Ascending aorta (tissue), 2 donors: ENCODE measurements at regions of chr1 and their contacts with region 1.

Region 1: DNA sequence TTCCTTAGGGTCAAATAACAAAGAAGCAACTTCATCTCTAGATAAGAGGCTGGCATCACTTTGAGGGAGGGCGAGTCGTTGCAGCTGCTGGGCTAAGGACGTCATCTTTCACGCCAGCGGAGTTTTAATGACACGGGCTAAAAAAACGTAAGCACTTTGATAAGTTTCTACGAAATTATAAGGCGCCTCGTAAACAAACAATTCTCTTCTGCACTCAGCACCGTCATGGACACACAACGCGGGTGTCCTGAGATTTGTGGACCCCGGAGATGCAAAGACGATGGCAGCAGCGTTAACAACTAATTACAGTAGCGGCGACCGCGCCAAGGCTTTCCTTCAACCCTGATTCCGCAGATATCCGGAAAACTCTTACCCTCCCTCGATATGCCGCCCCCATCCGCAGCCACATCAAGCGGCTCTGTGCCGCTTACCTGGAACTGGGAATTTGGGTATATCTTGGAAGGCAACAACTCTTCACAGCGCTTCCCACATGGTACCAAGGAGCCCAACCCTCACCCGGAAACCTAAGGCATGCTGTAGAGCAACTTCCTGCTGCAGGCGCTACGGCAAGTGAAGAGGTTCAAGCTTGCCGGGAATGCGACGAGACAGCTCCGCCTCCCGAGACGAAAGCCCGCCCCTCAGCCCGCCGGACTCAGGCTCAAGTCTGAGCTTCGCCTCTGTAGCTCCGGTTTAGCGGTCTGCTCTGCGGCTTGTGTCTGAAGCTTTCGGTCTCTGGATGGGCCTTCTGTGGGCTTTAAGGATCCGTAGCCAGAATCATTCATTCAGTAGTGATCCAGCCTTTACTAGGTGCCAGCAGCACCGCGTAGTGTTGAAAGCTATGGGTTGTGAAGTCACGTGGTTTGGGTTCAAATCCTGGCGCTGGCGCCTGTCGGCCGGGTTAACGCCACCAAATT is at the start of gene HEATR1:
- DNase-seq: peak; percentile 62 to 96
- H3K4me3 ChIP-seq: peak within 1 kb of the TSS; percentile 73 to 79
- H3K27ac ChIP-seq: peak within 1 kb of the TSS; percentile 83
- H3K4me1 ChIP-seq: peaks cover 3 to 8% of the 10 kb centered on the region in 2 donors
- H3K27me3 ChIP-seq: no peaks in the 10 kb centered on the region
- CTCF ChIP-seq: no peak
- total RNA-seq, gene HEATR1: 14.2 TPM

Region 2: DNA sequence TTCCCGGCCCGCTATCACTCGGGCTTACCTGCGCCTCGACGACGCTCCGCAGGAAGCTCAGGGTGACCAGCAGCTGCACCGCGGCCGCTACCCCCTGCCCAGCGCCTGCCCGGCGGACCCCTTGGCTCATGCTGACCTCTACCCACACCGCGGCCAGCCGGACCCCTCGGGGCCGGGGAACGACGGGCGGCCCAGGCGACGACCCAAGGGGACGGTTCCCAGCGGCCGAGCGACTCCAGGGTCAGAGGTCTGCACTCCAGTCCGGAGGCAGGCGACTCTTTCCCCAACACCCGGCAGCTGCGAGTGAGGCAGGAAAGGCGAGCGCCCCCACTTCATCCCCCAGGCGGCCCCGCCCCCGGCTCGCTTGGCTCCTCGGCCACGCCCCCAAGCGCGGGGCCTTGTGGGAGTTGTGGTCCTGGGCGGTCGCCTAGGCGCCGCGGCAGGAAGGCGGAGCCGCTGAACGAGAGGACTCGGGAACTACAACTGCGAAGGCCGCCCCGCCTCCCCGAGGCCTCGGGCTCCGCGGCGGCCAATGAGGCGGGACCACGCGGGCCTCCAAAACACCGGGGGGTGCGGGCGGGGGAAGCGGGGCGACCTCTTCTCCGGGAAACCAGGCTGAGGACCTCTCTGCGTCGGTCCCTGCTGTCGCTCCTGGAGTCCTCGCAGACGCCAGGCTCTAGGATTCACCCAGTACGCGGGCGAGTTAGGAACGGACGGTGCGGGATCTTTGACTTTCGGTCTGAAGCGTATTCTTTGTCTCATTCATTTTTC is 322.4 kb before region 1 on chr1 and contains the start of gene ERO1B:
- intact Hi-C with region 1: loop called (anchors 5 kb)
- DNase-seq: peak; percentile 94 to 99
- H3K4me3 ChIP-seq: peak within 1 kb of the TSS; percentile 80 to 98
- H3K27ac ChIP-seq: peak within 1 kb of the TSS; percentile 71 to 89
- H3K4me1 ChIP-seq: peaks cover 0 to 4% of the 10 kb centered on the region in 2 donors
- H3K27me3 ChIP-seq: no peaks in the 10 kb centered on the region
- CTCF ChIP-seq: no peak
- total RNA-seq, gene ERO1B: 5.1 TPM

Region 3: DNA sequence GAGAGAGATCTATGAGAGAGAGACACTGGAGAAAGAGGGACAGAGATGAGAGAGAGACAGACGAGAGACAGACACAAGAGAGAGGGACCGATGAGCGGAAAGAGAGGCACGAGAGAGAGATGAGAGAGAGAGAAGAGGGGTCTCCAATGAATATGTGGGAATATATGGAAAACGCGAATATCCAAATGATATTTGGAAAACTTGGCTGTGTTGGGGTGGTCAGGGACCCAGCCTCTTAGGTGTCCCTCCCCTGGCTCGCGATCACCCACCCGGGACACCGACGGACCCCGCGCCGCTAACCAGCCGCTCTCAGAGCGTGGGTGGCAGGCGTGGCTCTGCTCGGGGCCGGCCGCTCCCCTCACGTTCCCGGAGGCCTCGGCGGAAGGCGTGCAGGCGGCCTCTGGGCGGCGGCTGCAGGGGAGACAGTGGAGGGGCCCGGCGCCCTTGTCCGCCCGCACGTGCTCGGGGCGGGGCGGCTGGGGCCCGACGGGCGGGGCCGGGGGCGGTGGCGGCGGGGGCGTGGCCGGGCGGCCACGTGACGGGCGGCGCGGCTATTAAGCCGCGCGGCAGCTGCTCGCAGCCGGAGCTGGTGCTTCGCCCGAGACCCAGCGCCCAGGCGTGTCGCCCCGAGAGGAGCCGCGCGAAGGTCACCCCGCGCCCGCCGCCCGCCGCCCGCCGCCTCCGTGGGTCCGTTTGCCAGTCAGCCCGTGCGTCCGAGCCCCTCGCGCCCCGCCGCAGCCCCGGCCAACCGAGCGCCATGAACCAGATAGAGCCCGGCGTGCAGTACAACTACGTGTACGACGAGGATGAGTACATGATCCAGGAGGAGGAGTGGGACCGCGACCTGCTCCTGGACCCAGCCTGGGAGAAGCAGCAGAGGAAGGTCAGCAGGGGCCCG is 81.9 kb after region 1 on chr1 and contains the start of gene ACTN2:
- intact Hi-C with region 1: loop called (anchors 5 kb)
- DNase-seq: peak in 1 of 2 donors; percentile 79
- H3K4me3 ChIP-seq: peak within 1 kb of the TSS; percentile 76 to 87
- H3K27ac ChIP-seq: peak within 1 kb of the TSS; percentile 85 to 86
- H3K4me1 ChIP-seq: peaks cover 0 to 8% of the 10 kb centered on the region in 2 donors
- H3K27me3 ChIP-seq: no peaks in the 10 kb centered on the region
- CTCF ChIP-seq: no peak
- total RNA-seq, gene ACTN2: 10.5 TPM

Region 4: DNA sequence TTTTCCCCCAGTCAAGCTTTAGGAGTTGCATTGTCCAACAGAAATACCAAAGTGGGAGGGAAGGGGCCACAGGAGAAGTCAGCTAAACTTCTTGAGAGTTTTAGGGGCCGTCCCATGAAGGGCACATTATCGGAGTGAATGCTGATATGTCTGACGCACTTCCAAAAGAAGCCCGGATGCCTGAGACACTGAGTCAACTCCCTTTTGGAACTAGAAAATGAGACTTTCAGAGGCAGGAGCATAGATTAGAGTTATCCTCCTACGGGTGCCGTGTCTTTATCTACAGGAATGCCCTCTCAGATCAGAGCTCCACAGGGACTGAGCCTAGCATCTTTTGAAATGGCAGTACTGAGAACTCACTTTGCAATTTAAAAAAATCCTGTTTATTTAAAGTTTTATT is 95.1 kb after region 1 on chr1:
- intact Hi-C with region 1: no loop called
- DNase-seq: no peak
- H3K4me3 ChIP-seq: peak overlapping the region in 1 of 2 donors; percentile 31
- H3K27ac ChIP-seq: peak overlapping the region; percentile 17 to 38
- H3K4me1 ChIP-seq: peaks cover 0 to 20% of the 10 kb centered on the region in 2 donors
- H3K27me3 ChIP-seq: no peaks in the 10 kb centered on the region
- CTCF ChIP-seq: no peak

Region 5: DNA sequence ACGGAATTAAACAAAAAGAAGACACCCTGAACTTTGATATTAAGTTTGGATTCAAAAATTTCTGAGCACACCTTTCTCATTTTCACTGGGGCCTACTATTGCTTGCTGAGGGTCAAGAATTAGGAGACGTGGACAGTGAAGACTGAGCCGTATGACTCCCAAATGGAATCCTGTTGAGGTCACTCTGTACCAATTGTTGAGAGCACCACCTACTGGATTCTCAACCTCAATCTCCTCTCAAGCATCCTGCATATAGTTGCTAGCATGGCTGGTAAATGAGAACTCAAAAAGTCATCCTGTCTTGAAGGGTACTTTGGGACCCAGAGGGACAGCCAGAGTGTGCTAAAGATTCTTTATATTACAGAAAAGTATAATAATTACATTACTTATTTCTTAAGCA is 170.7 kb after region 1 on chr1:
- intact Hi-C with region 1: loop called (anchors 2 kb)
- DNase-seq: no peak
- H3K4me3 ChIP-seq: no peak overlapping the region
- H3K27ac ChIP-seq: no peak overlapping the region
- H3K4me1 ChIP-seq: no peaks in the 10 kb centered on the region
- H3K27me3 ChIP-seq: no peaks in the 10 kb centered on the region
- CTCF ChIP-seq: peak; percentile 23 to 47 (median 28)

Region 6: DNA sequence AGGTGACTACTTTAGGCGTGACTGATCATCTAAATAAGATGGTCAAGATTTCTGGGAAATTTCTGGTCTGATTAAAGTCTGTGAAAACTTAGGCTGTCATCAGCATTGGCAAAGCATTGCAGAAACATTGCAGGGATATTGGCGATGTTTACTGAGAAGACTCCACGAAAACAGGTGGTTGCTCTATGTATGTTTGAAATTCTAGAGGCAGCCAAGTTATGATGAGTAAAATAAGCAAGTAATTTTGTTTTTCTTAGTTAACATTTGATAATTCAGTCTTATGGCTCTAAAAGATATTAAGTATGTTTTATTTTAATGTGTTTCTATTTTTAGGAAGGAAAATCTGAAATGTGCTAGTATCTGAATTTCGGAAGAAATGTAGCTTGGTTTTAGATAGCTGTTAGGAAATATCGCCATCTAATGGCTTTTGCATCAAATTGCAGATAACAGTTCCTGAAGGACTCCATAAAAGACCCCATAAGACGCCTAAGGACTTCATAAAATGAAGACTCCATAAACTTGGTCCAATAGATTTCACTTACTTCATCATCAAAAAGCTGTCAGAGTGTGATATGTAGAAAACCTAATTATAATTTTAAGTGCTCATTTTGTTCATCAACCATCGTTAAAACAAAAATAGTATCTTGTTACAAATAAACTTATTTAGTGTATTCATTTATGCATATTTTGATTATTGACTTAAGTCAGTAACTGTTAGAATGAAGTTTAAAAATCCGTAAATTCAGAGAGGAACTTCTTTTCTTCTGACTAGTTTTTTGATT is 782.3 kb after region 1 on chr1:
- intact Hi-C with region 1: loop called (anchors 10 kb)
- DNase-seq: no peak
- H3K4me3 ChIP-seq: no peak overlapping the region
- H3K27ac ChIP-seq: peak overlapping the region in 1 of 2 donors; percentile 34
- H3K4me1 ChIP-seq: peaks cover 0 to 8% of the 10 kb centered on the region in 2 donors
- H3K27me3 ChIP-seq: no peaks in the 10 kb centered on the region
- CTCF ChIP-seq: peak; percentile 39 to 73 (median 48)